Spleen (tissue), 13 donors: ENCODE measurements at regions of chr22 and their contacts with region 1.

Region 1: DNA sequence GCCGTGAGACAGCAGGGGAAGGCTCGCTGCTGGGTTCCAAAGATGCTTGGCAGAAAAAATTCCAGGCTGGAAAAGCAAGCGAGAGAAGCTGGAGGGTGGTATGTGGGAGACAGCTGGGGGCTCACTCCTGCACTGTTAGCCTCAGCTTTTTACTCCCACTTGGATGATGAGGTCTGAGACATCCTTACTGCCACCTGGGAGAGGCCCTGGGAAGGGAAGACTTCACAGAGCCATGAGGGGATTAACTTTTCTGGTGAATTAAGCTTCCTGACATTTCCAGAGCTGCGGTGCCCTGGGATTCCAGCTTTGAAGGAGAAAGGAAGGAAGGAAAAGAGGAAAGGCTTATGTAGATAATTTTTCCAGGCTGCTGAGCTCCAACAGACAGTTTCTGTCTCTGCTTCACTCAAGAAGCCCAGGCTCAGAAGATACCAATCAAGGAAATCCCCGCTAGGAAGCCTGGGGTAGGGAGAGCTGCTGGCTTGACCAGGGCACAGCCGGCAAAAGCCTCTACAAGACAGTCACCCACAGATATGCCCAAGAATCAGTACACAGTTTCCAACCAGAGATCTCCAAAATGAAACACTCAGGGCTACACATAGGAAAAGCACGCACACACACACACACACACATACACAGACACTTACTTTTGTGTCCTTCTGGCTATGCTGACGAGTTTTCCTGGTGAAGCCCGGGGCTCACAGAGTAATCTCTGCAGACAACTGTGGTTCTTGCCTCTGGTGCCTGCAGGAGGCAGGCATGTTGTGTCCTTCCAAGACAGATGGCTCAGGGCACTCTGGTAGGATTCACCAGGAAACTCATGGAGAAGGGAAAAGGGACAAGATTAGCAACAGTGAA is 907 bp downstream of the MCHR1 start:
- DNase-seq: no peak
- H3K4me3 ChIP-seq: no peak overlapping the region
- H3K27ac ChIP-seq: no peak overlapping the region
- H3K4me1 ChIP-seq: peaks cover 0 to 36% (median 19%) of the 10 kb centered on the region in 6 donors
- H3K27me3 ChIP-seq: peaks cover 0 to 48% (median 7%) of the 10 kb centered on the region in 7 donors
- CTCF ChIP-seq: no peak
- POLR2A ChIP-seq: no peak

Region 2: GRCh38 chr22:40491990-40492631 is 188.1 kb before region 1 on chr22:
- intact Hi-C with region 1: no loop called
- DNase-seq: no peak
- H3K4me3 ChIP-seq: peak overlapping the region in 1 of 8 donors; percentile 32
- H3K27ac ChIP-seq: peak overlapping the region in 7 of 8 donors; percentile 16 to 80 (median 65)
- H3K4me1 ChIP-seq: peaks cover 28 to 78% (median 41%) of the 10 kb centered on the region in 6 donors
- H3K27me3 ChIP-seq: no peaks in the 10 kb centered on the region
- CTCF ChIP-seq: no peak
- POLR2A ChIP-seq: no peak

Region 3: DNA sequence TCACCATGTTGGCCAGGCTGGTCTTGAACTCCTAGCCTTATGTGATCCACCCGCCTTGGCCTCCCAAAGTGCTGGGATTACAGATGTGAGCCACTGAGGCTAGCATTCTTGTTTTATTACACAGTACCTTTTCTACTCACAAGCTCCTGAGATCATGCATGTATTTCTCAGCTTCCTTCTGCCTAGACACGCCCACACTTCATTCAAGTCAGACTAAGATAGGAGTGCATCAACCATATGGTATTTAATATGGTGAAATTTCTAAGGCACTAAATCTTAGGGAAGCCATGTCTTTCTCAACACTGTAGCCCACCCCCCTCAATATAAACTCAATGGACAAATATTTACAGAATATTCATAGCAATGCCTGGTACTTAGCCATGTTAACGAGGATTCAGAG is 76.9 kb after region 1 on chr22:
- intact Hi-C with region 1: loop called (anchors 10 kb)
- DNase-seq: no peak
- H3K4me3 ChIP-seq: no peak overlapping the region
- H3K27ac ChIP-seq: no peak overlapping the region
- H3K4me1 ChIP-seq: peaks cover 0 to 13% (median 3%) of the 10 kb centered on the region in 6 donors
- H3K27me3 ChIP-seq: no peaks in the 10 kb centered on the region
- CTCF ChIP-seq: no peak
- POLR2A ChIP-seq: no peak

Region 4: GRCh38 chr22:41256254-41256897 is 576.2 kb after region 1 on chr22:
- intact Hi-C with region 1: no loop called
- DNase-seq: no peak
- H3K4me3 ChIP-seq: no peak overlapping the region
- H3K27ac ChIP-seq: no peak overlapping the region
- H3K4me1 ChIP-seq: no peaks in the 10 kb centered on the region
- H3K27me3 ChIP-seq: no peaks in the 10 kb centered on the region
- CTCF ChIP-seq: no peak
- POLR2A ChIP-seq: no peak